ENCODE measurements at regions of chr2 and their contacts with region 1.

Region 1: GRCh38 chr2:86035883-86036668 is 69.6 kb downstream of the POLR1A start:
- DNase-seq: peak; percentile 77
- ATAC-seq: peak; percentile 37
- H3K4me3 Mint-ChIP-seq: peak overlapping the region; percentile 10
- H3K27ac Mint-ChIP-seq: peak overlapping the region; percentile 97
- H3K4me1 Mint-ChIP-seq: peaks cover 70% of the 10 kb centered on the region
- H3K27me3 Mint-ChIP-seq: no peaks in the 10 kb centered on the region

Region 2: DNA sequence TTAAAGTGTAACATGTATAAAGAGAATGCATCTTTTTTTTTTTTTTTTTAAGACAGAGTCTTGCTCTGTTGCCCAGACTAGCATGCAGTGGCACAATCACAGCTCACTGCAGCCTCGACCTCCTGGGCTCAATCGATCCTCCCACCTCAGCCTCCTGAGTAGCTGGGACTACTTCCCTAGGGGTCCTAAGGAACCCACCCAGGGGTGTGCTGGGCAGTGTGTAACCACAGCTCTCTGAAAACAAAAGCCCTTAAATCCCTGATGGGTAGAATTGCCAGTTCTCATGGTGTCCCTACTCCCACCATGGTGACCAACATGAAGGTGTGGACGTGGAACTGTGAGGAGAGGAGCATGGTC is 41.7 kb before region 1 on chr2:
- CTCF ChIA-PET with region 1: no interaction called
- POLR2A ChIA-PET with region 1: no interaction called
- intact Hi-C with region 1: loop called (anchors 1 kb)
- DNase-seq: no peak
- ATAC-seq: peak; percentile 11
- H3K4me3 Mint-ChIP-seq: no peak overlapping the region
- H3K27ac Mint-ChIP-seq: no peak overlapping the region
- H3K4me1 Mint-ChIP-seq: peaks cover 34% of the 10 kb centered on the region
- H3K27me3 Mint-ChIP-seq: no peaks in the 10 kb centered on the region

Region 3: GRCh38 chr2:86020984-86021383 is 15.1 kb before region 1 on chr2:
- CTCF ChIA-PET with region 1: no interaction called
- POLR2A ChIA-PET with region 1: no interaction called
- intact Hi-C with region 1: no loop called
- DNase-seq: no peak
- ATAC-seq: no peak
- H3K4me3 Mint-ChIP-seq: no peak overlapping the region
- H3K27ac Mint-ChIP-seq: no peak overlapping the region
- H3K4me1 Mint-ChIP-seq: peaks cover 9% of the 10 kb centered on the region
- H3K27me3 Mint-ChIP-seq: no peaks in the 10 kb centered on the region

Measured in activated CD4-positive, alpha-beta T cell treated with anti-CD3 and anti-CD28 coated beads for 36 hours (primary cell).